ENCODE measurements at regions of chr13 and their contacts with region 1.

Region 1: DNA sequence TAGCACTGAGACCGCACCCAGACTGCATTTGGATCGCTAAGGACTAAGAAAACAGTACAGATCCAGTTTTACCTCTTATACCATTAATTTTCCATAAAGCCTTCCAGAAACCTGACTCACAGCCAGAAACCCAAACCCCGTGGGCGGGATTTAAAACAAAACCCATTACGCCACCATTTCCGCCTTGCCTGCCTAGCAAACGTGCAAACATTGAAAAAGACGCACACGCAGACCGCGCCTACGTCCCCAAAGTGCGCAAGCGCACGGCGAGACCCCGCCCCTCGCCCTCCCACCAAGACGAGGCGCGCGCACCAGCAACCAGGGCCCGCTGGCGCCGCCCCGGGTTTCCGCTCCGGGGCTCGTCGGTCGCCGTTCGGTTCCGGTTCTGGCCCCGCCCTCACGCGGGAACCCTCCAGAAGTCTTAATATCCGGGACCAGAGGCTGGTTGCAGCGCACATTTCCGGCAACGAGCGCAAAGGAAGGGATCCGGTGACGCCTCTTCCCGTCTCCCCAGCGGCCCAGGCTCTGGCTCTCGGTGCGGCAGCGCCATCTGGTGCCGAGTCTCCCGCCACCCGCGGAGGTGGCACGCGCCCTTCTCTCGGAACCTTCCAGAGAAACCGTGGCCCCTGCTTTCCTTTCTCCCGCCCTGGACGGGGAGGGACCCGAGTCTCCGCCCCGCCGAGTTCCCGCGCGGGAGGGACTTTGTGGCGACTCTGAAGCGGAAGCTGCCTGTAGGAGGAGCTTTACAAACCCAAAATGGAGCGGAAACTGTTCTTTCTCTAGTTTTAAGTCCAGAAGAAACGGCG is 256.9 kb upstream of the STARD13 start:
- DNase-seq: peak; percentile 100
- H3K4me3 Mint-ChIP-seq: peak overlapping the region; percentile 90
- H3K27ac Mint-ChIP-seq: peak overlapping the region; percentile 99
- H3K4me1 Mint-ChIP-seq: peaks cover 37% of the 10 kb centered on the region
- H3K27me3 Mint-ChIP-seq: peaks cover 2% of the 10 kb centered on the region

Region 2: GRCh38 chr13:32315238-32316027 is 1227.1 kb before region 1 on chr13 and contains the starts of genes BRCA2 and ZAR1L:
- intact Hi-C with region 1: loop called (anchors 2 kb)
- DNase-seq: peak; percentile 97
- H3K4me3 Mint-ChIP-seq: peak within 1 kb of the TSS; percentile 96
- H3K27ac Mint-ChIP-seq: peak within 1 kb of the TSS; percentile 100
- H3K4me1 Mint-ChIP-seq: peaks cover 24% of the 10 kb centered on the region
- H3K27me3 Mint-ChIP-seq: no peaks in the 10 kb centered on the region
- total RNA-seq, gene BRCA2: 23.1 and 24.7 TPM in 2 replicates
- total RNA-seq, gene ZAR1L: 0.19 TPM in 1 of 2 replicates, not detected in the other

Region 3: DNA sequence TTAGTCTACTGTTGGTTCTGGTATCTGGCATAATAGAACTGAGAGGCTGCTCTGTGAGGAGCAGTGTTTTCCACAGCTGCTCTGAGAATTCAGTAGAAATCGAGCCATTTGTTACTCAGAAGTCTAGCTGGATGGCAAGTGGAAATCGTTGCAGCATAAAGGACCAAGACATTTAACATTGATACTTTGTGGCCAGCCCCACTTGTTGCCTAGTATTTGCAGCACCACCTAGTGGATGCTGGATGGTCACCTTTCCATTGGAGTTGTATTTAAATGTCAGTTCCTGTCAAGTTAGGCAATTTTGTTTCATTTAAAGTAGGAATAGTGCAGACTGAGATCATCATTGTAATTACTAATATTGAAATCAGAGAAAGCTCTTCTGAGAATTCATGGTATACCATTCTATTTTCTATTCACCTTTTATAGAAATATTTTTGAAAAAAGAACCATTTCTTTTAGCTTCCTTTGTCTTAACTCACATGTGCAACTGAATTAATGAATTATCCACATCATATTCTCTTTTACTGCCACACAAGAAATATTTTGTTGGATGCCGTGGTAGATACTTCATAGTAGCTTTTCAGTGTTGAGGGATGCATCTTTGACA is 891.7 kb before region 1 on chr13:
- intact Hi-C with region 1: loop called (anchors 1 kb)
- DNase-seq: peak; percentile 87
- H3K4me3 Mint-ChIP-seq: no peak overlapping the region
- H3K27ac Mint-ChIP-seq: no peak overlapping the region
- H3K4me1 Mint-ChIP-seq: peaks cover 29% of the 10 kb centered on the region
- H3K27me3 Mint-ChIP-seq: no peaks in the 10 kb centered on the region

Region 4: DNA sequence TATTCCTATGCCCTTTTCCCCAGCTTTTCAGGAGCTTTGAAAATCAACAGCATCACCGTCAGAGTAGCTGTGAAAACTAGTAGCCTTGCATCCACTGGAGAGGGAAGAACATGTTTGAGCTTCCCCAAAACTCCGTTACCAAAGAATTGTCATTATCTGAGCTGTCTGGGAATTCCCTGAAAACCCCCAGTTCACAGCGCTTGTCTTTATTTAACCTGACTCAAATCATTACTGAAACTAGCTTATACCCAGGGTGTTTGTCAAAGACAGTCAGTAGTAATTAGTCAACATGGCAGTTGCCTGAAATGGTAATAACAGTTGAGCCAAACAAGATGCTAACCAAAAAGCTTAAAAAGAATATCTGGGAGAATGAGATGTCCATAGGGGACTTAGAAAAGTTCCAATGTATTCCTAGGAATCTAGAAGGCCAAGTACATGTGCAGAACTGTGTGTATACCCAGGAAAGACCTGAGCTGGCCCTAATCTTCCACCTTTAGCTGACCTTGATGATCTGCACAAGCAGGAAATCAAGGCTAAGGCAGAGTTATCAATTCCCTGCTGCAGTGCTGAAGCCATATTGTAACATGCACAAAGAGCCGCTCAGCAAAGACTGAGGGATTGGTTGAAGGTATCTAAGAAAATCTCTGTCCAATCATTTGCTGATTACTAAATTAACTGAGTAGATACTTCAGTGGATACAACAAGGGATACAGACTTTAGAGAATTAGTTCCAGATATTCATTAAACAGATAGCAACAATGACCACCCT is 395.5 kb before region 1 on chr13:
- intact Hi-C with region 1: loop called (anchors 2 kb)
- DNase-seq: peak; percentile 75
- H3K4me3 Mint-ChIP-seq: peak overlapping the region; percentile 35
- H3K27ac Mint-ChIP-seq: peak overlapping the region; percentile 90
- H3K4me1 Mint-ChIP-seq: peaks cover 28% of the 10 kb centered on the region
- H3K27me3 Mint-ChIP-seq: no peaks in the 10 kb centered on the region

Region 5: DNA sequence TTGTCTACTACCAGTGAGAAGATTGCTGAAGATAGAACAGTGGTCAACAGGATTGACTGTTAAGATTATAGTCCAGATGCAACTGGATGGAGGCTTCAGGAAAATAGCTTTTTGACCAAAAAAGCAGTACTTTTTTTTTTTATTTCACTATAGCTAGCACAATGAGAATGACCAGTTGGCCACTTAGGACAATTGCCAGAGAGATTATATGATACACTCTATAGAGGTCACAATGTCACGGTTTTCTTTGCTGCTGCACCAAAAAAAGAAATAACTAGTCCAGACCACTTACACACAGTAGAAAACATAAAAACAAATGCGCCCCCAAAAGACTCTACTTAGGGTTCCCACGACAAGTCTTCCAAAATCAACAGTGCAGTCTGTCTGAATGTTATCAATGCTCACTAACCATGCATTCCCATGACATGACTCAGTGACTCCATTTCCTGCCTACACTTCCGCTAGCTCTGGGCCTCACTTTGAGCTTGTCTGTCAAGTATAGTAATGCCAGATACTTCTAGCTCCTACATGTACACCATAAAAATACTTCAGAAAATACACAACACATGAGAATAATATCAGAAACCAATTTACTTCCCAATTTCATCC is 47.8 kb before region 1 on chr13:
- intact Hi-C with region 1: loop called (anchors 5 kb)
- DNase-seq: no peak
- H3K4me3 Mint-ChIP-seq: no peak overlapping the region
- H3K27ac Mint-ChIP-seq: no peak overlapping the region
- H3K4me1 Mint-ChIP-seq: peaks cover 5% of the 10 kb centered on the region
- H3K27me3 Mint-ChIP-seq: peaks cover 1% of the 10 kb centered on the region

Region 6: GRCh38 chr13:33723772-33724435 is 181.4 kb after region 1 on chr13:
- intact Hi-C with region 1: loop called (anchors 1 kb)
- DNase-seq: peak; percentile 90
- H3K4me3 Mint-ChIP-seq: no peak overlapping the region
- H3K27ac Mint-ChIP-seq: peak overlapping the region; percentile 76
- H3K4me1 Mint-ChIP-seq: peaks cover 26% of the 10 kb centered on the region
- H3K27me3 Mint-ChIP-seq: no peaks in the 10 kb centered on the region